ENCODE measurements at regions of chr2 and their contacts with region 1.

Region 1: DNA sequence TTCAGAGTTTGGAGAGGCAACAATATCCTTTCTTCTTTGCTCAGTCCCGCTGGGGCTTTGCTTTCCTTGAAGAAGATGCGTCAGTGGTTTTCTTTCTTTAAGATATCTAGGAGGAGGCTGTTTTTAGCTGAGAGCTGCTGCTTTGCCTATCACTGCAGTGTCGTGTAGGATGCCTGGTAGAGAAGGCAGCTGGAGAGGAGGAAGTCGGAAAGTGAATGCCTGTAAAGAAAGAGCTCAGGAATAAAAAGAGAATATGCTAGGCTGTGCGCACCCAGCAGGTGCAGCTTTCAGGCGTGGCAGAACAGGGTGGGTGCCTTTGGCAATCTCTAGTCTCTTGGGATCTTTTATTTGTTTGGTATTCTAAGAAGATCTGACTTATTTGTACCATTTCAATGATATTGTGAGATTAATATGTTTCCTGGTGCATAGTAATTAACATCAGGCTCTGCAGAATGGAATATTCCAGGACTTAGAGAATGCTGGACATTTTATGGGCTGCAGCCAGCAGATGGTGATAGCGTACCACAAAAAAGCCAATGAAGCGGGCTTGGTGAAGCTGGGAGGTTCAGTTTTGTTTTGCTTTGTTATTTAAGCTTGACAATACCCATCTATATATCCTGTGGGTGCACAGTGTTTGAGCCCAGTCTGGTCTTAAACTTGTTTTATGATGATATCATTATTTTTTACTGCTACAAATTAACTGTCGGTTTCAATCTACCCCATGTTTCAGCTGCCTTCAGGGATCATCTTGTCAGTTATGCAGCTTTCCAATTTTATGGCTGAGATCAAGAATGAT is 34.9 kb downstream of the CAVIN2 start:
- DNase-seq: peak in 4 of 5 donors; percentile 47 to 54 (median 51)
- ATAC-seq: peak; percentile 75 to 88 (median 82)
- H3K4me3 ChIP-seq: peak overlapping the region in 8 of 12 donors; percentile 22 to 43 (median 29)
- H3K27ac ChIP-seq: no peak overlapping the region
- H3K4me1 ChIP-seq: peaks cover 0 to 6% (median 0%) of the 10 kb centered on the region in 12 donors
- H3K27me3 ChIP-seq: no peaks in the 10 kb centered on the region
- CTCF ChIP-seq: peak; percentile 57 to 94 (median 84)
- POLR2A ChIP-seq: no peak

Region 2: GRCh38 chr2:190468814-190469569 is 1343.0 kb before region 1 on chr2:
- intact Hi-C with region 1: no loop called
- DNase-seq: peak; percentile 72 to 87 (median 82)
- ATAC-seq: peak; percentile 82 to 90 (median 86)
- H3K4me3 ChIP-seq: peak overlapping the region in 5 of 12 donors; percentile 7 to 27 (median 7)
- H3K27ac ChIP-seq: peak overlapping the region; percentile 69 to 91 (median 82)
- H3K4me1 ChIP-seq: peaks cover 17 to 59% (median 40%) of the 10 kb centered on the region in 12 donors
- H3K27me3 ChIP-seq: no peaks in the 10 kb centered on the region
- CTCF ChIP-seq: no peak
- POLR2A ChIP-seq: no peak

Region 3: GRCh38 chr2:191555092-191555742 is 256.8 kb before region 1 on chr2:
- intact Hi-C with region 1: loop called in 3 of 10 experiments (anchors 5 to 10 kb)
- DNase-seq: peak; percentile 71 to 81 (median 77)
- ATAC-seq: peak; percentile 77 to 93 (median 89)
- H3K4me3 ChIP-seq: no peak overlapping the region
- H3K27ac ChIP-seq: no peak overlapping the region
- H3K4me1 ChIP-seq: peaks cover 0 to 3% (median 0%) of the 10 kb centered on the region in 12 donors
- H3K27me3 ChIP-seq: peaks cover 0 to 8% (median 0%) of the 10 kb centered on the region in 9 donors
- CTCF ChIP-seq: peak; percentile 62 to 79 (median 70)
- POLR2A ChIP-seq: no peak

Region 4: DNA sequence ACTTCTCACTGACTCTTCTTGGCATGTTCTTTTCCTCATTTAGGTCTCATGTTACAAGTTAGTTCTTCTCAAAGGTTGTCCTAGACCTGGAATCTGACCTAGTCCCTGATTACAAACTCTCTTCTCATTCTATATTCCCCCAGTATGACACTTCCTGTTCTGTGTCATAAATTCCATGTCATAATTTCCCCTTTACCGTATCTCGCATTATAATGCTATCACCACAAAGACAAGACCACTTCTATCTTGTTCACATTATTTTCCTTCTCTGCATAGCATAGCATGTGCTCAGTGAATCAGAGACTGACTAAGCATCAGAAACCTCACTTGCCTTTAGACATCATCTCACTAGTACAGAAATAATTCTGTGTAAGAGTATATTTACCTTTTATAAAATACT is 98.5 kb after region 1 on chr2:
- intact Hi-C with region 1: loop called in 4 of 10 experiments (anchors 2 to 10 kb)
- DNase-seq: no peak
- ATAC-seq: no peak
- H3K4me3 ChIP-seq: no peak overlapping the region
- H3K27ac ChIP-seq: no peak overlapping the region
- H3K4me1 ChIP-seq: peaks cover 0 to 12% (median 7%) of the 10 kb centered on the region in 12 donors
- H3K27me3 ChIP-seq: no peaks in the 10 kb centered on the region
- CTCF ChIP-seq: no peak
- POLR2A ChIP-seq: no peak

Region 5: GRCh38 chr2:192035731-192036442 is 223.9 kb after region 1 on chr2:
- intact Hi-C with region 1: loop called in 1 of 10 experiments (anchors 10 kb)
- DNase-seq: no peak
- ATAC-seq: no peak
- H3K4me3 ChIP-seq: no peak overlapping the region
- H3K27ac ChIP-seq: peak overlapping the region in 1 of 12 donors; percentile 33
- H3K4me1 ChIP-seq: peaks cover 0 to 6% (median 0%) of the 10 kb centered on the region in 12 donors
- H3K27me3 ChIP-seq: no peaks in the 10 kb centered on the region
- CTCF ChIP-seq: no peak
- POLR2A ChIP-seq: no peak

Region 6: GRCh38 chr2:192162392-192163042 is 350.5 kb after region 1 on chr2:
- intact Hi-C with region 1: loop called (anchors 1 to 2 kb)
- DNase-seq: peak in 3 of 5 donors; percentile 57 to 63 (median 63)
- ATAC-seq: peak; percentile 64 to 89 (median 80)
- H3K4me3 ChIP-seq: peak overlapping the region in 7 of 12 donors; percentile 8 to 36 (median 22)
- H3K27ac ChIP-seq: peak overlapping the region in 1 of 12 donors; percentile 21
- H3K4me1 ChIP-seq: peaks cover 0 to 10% (median 0%) of the 10 kb centered on the region in 12 donors
- H3K27me3 ChIP-seq: peaks cover 0 to 4% (median 0%) of the 10 kb centered on the region in 9 donors
- CTCF ChIP-seq: peak; percentile 81 to 97 (median 94)
- POLR2A ChIP-seq: no peak

Measured in heart left ventricle (tissue), 16 donors.